HEK293 (cell line): ENCODE measurements at regions of chr22 and their contacts with region 1.

Region 1: DNA sequence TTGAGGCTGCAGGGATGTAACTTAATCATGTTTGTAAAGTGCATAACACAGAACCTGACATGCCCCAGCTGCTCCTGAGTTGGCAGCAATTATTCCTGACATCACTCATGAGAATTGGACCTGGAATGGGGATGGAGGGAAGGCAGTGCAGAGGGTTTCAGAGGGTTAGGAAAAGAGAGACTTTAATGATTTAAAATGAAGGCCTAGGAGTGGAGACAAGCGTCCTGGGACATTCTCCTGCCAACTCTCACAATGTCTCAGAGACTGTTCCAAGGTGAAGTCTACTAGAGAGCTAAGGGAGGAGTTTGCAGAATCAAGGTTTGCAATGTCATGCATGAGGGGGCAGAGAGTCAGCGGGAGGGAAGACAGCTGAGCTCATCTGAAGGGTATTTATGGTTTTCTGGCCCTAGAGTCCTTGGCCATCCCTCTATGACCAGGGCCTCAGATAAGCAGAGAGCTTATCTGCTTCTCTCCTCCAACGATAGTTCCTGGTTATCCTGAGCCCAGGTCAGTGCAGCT is 36.9 kb downstream of the GGTLC2 start:
- H3K4me3 ChIP-seq: no peak overlapping the region
- H3K27ac ChIP-seq: no peak overlapping the region
- H3K4me1 ChIP-seq: no peaks in the 10 kb centered on the region
- CTCF ChIP-seq: no peak

Region 2: GRCh38 chr22:22692707-22693530 is 11.6 kb after region 1 on chr22:
- CTCF ChIA-PET with region 1: interaction called, 21 read pairs
- POLR2A ChIA-PET with region 1: no interaction called
- H3K4me3 ChIP-seq: no peak overlapping the region
- H3K27ac ChIP-seq: no peak overlapping the region
- H3K4me1 ChIP-seq: no peaks in the 10 kb centered on the region
- CTCF ChIP-seq: no peak

Region 3: GRCh38 chr22:22818861-22819855 is 137.9 kb after region 1 on chr22:
- CTCF ChIA-PET with region 1: no interaction called
- POLR2A ChIA-PET with region 1: no interaction called
- H3K4me3 ChIP-seq: no peak overlapping the region
- H3K27ac ChIP-seq: no peak overlapping the region
- H3K4me1 ChIP-seq: no peaks in the 10 kb centered on the region
- CTCF ChIP-seq: no peak

Region 4: GRCh38 chr22:22855617-22856308 is 174.5 kb after region 1 on chr22:
- CTCF ChIA-PET with region 1: no interaction called
- POLR2A ChIA-PET with region 1: no interaction called
- H3K4me3 ChIP-seq: no peak overlapping the region
- H3K27ac ChIP-seq: no peak overlapping the region
- H3K4me1 ChIP-seq: no peaks in the 10 kb centered on the region
- CTCF ChIP-seq: peak; percentile 77